ENCODE measurements at regions of chr10 and their contacts with region 1.

Region 1: GRCh38 chr10:113087165-113088029 is 137.3 kb downstream of the TCF7L2 start:
- DNase-seq: peak; percentile 100
- ATAC-seq: peak; percentile 92
- H3K4me3 ChIP-seq: peak overlapping the region in 1 of 2 experiments; percentile 30; a peak in 2 of 4 replicates
- H3K27ac ChIP-seq: peak overlapping the region; percentile 92
- H3K4me1 ChIP-seq: peaks cover 93 to 95% of the 10 kb centered on the region in 2 experiments
- H3K27me3 ChIP-seq: no peaks in the 10 kb centered on the region
- CTCF ChIP-seq: no peak
- POLR2A ChIP-seq: no peak
- RAD21 ChIP-seq: no peak

Region 2: GRCh38 chr10:112880633-112881530 is 206.5 kb before region 1 on chr10:
- CTCF ChIA-PET with region 1: no interaction called
- POLR2A ChIA-PET with region 1: interaction called, 3 read pairs
- RAD21 ChIA-PET with region 1: no interaction called
- intact Hi-C with region 1: loop called (anchors 1 kb)
- DNase-seq: no peak
- ATAC-seq: no peak
- H3K4me3 ChIP-seq: no peak overlapping the region
- H3K27ac ChIP-seq: no peak overlapping the region
- H3K4me1 ChIP-seq: peaks cover 3 to 12% of the 10 kb centered on the region in 2 experiments
- H3K27me3 ChIP-seq: no peaks in the 10 kb centered on the region
- CTCF ChIP-seq: no peak
- POLR2A ChIP-seq: no peak
- RAD21 ChIP-seq: no peak

Region 3: GRCh38 chr10:113142601-113143323 is 55.4 kb after region 1 on chr10:
- CTCF ChIA-PET with region 1: no interaction called
- POLR2A ChIA-PET with region 1: no interaction called
- RAD21 ChIA-PET with region 1: no interaction called
- intact Hi-C with region 1: no loop called
- DNase-seq: no peak
- ATAC-seq: no peak
- H3K4me3 ChIP-seq: no peak overlapping the region
- H3K27ac ChIP-seq: no peak overlapping the region
- H3K4me1 ChIP-seq: peaks cover 3 to 8% of the 10 kb centered on the region in 2 experiments; a peak in 2 of 4 replicates
- H3K27me3 ChIP-seq: no peaks in the 10 kb centered on the region
- CTCF ChIP-seq: no peak
- POLR2A ChIP-seq: no peak
- RAD21 ChIP-seq: no peak

Measured in HCT116 (cell line).